ENCODE measurements at regions of chr1 and their contacts with region 1.

Region 1: DNA sequence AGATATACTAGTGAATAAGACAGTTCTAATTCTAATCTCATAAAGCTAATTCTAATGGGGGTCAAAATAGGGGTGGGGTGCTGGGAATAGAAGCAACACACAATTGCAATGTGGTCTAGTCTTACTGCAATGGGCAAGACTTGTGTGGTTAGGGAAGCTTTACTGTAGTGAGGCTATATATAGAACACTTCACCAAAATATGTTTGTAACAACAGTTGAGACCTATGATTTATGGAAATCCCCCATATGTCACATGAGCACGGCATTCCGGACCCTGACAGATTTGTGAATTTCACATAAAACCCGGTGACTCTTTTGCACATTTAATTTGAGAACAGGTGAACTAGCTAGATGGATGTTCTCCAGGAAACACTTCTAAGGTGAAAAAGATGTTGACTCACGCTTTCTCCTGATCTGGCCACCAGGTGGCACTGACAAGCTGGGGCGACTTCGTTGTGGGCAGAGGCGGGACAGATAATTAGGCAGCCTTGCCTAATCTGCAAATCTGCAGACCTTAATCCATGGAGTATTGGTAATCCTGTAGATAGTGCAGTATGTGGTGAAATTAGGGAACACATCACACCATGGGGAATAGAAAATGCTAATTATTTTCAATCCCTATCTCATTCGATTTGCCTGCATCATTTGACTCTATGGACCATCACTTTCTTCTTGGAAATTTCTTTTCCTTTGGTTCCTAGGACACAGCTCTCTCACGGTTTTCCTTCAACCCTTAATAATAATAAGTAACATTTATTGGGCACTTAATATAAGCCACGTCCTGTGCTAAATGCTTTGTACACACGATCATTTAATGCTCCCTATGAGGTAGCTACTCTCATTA is 37.7 kb downstream of the KIAA0040 start:
- DNase-seq: peak; percentile 81
- ATAC-seq: peak; percentile 64
- H3K4me3 ChIP-seq: no peak overlapping the region
- H3K4me3 Mint-ChIP-seq: no peak overlapping the region
- H3K27ac ChIP-seq: no peak overlapping the region
- H3K27ac Mint-ChIP-seq: no peak overlapping the region
- H3K4me1 ChIP-seq: peaks cover 16 to 27% of the 10 kb centered on the region in 2 donors
- H3K4me1 Mint-ChIP-seq: peaks cover 34% of the 10 kb centered on the region
- H3K27me3 ChIP-seq: peaks cover 0 to 16% (median 7%) of the 10 kb centered on the region in 4 experiments
- H3K27me3 Mint-ChIP-seq: peaks cover 18% of the 10 kb centered on the region
- CTCF ChIP-seq: peak; percentile 92

Region 2: GRCh38 chr1:175043824-175044223 is 111.0 kb before region 1 on chr1:
- CTCF ChIA-PET with region 1: no interaction called
- POLR2A ChIA-PET with region 1: no interaction called
- intact Hi-C with region 1: no loop called
- DNase-seq: no peak
- ATAC-seq: no peak
- H3K4me3 ChIP-seq: no peak overlapping the region
- H3K4me3 Mint-ChIP-seq: no peak overlapping the region
- H3K27ac ChIP-seq: no peak overlapping the region
- H3K27ac Mint-ChIP-seq: no peak overlapping the region
- H3K4me1 ChIP-seq: no peaks in the 10 kb centered on the region
- H3K4me1 Mint-ChIP-seq: no peaks in the 10 kb centered on the region
- H3K27me3 ChIP-seq: no peaks in the 10 kb centered on the region
- H3K27me3 Mint-ChIP-seq: peaks cover 33% of the 10 kb centered on the region
- CTCF ChIP-seq: no peak

Region 3: GRCh38 chr1:175178056-175178455 is 23.2 kb after region 1 on chr1:
- CTCF ChIA-PET with region 1: interaction called, 12 read pairs
- POLR2A ChIA-PET with region 1: no interaction called
- intact Hi-C with region 1: no loop called
- DNase-seq: no peak
- ATAC-seq: no peak
- H3K4me3 ChIP-seq: no peak overlapping the region
- H3K4me3 Mint-ChIP-seq: no peak overlapping the region
- H3K27ac ChIP-seq: peak overlapping the region in 1 of 2 donors; percentile 71
- H3K27ac Mint-ChIP-seq: peak overlapping the region; percentile 65
- H3K4me1 ChIP-seq: peaks cover 71 to 72% of the 10 kb centered on the region in 2 donors
- H3K4me1 Mint-ChIP-seq: peaks cover 88% of the 10 kb centered on the region
- H3K27me3 ChIP-seq: no peaks in the 10 kb centered on the region
- H3K27me3 Mint-ChIP-seq: no peaks in the 10 kb centered on the region
- CTCF ChIP-seq: no peak

Region 4: DNA sequence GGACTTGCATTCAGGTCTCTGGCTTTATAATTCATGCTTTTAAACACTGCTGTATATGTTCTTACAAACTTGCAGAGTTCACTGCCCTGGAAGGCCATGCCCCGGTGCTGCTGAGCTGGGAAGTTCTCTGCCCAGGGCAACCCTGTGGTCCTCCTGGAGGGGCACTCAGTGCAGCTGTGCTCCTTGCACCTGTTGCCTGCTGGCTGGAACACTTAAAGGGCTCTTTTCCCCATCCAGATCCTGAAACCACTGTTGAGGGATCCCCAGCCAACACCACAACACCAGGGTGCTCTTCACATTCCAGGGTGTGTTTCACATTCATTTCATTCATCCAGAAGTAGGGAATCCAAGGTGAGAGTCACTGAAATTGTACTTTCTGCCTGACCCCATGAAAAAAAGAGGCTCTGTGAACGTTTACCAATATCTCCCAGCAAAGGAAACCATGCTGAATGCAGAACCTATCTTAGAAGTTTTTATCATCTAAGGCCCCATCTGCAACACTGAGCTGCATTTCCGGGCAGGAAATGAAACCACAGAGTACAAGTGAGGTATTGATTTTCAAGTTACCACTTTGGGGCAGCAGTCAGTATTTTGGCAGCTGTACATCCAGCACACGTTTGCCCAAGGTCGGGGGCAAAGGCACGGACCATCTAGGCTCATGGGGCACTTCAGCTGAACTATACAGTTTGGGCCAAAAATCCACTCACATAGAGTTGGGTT is 54.1 kb after region 1 on chr1:
- CTCF ChIA-PET with region 1: interaction called, 25 read pairs
- POLR2A ChIA-PET with region 1: no interaction called
- intact Hi-C with region 1: no loop called
- DNase-seq: peak; percentile 75
- ATAC-seq: peak; percentile 92
- H3K4me3 ChIP-seq: peak overlapping the region in 2 of 5 experiments; percentile 5 to 47
- H3K4me3 Mint-ChIP-seq: peak overlapping the region; percentile 86
- H3K27ac ChIP-seq: peak overlapping the region; percentile 86 to 88
- H3K27ac Mint-ChIP-seq: peak overlapping the region; percentile 99
- H3K4me1 ChIP-seq: peaks cover 45 to 60% of the 10 kb centered on the region in 2 donors
- H3K4me1 Mint-ChIP-seq: peaks cover 69% of the 10 kb centered on the region
- H3K27me3 ChIP-seq: no peaks in the 10 kb centered on the region
- H3K27me3 Mint-ChIP-seq: no peaks in the 10 kb centered on the region
- CTCF ChIP-seq: no peak

Region 5: GRCh38 chr1:175319418-175320230 is 164.8 kb after region 1 on chr1:
- CTCF ChIA-PET with region 1: interaction called, 468 read pairs
- POLR2A ChIA-PET with region 1: interaction called, 4 read pairs
- intact Hi-C with region 1: loop called (anchors 1 kb)
- DNase-seq: peak; percentile 83
- ATAC-seq: peak; percentile 88
- H3K4me3 ChIP-seq: peak overlapping the region in 3 of 5 experiments; percentile 15 to 49 (median 27)
- H3K4me3 Mint-ChIP-seq: peak overlapping the region; percentile 80
- H3K27ac ChIP-seq: peak overlapping the region in 1 of 2 donors; percentile 20
- H3K27ac Mint-ChIP-seq: peak overlapping the region; percentile 75
- H3K4me1 ChIP-seq: peaks cover 6 to 14% of the 10 kb centered on the region in 2 donors
- H3K4me1 Mint-ChIP-seq: peaks cover 26% of the 10 kb centered on the region
- H3K27me3 ChIP-seq: peaks cover 0 to 3% (median 0%) of the 10 kb centered on the region in 4 experiments
- H3K27me3 Mint-ChIP-seq: no peaks in the 10 kb centered on the region
- CTCF ChIP-seq: peak; percentile 91

Region 6: GRCh38 chr1:175373786-175374623 is 219.2 kb after region 1 on chr1:
- CTCF ChIA-PET with region 1: interaction called, 10 read pairs
- POLR2A ChIA-PET with region 1: no interaction called
- intact Hi-C with region 1: no loop called
- DNase-seq: peak; percentile 41
- ATAC-seq: no peak
- H3K4me3 ChIP-seq: no peak overlapping the region
- H3K4me3 Mint-ChIP-seq: no peak overlapping the region
- H3K27ac ChIP-seq: no peak overlapping the region
- H3K27ac Mint-ChIP-seq: no peak overlapping the region
- H3K4me1 ChIP-seq: no peaks in the 10 kb centered on the region
- H3K4me1 Mint-ChIP-seq: no peaks in the 10 kb centered on the region
- H3K27me3 ChIP-seq: no peaks in the 10 kb centered on the region
- H3K27me3 Mint-ChIP-seq: peaks cover 2% of the 10 kb centered on the region
- CTCF ChIP-seq: peak; percentile 71

Region 7: GRCh38 chr1:175757381-175758015 is 602.6 kb after region 1 on chr1:
- CTCF ChIA-PET with region 1: interaction called, 5 read pairs
- POLR2A ChIA-PET with region 1: no interaction called
- intact Hi-C with region 1: loop called (anchors 5 kb)
- DNase-seq: peak; percentile 25
- ATAC-seq: no peak
- H3K4me3 ChIP-seq: no peak overlapping the region
- H3K4me3 Mint-ChIP-seq: no peak overlapping the region
- H3K27ac ChIP-seq: no peak overlapping the region
- H3K27ac Mint-ChIP-seq: no peak overlapping the region
- H3K4me1 ChIP-seq: no peaks in the 10 kb centered on the region
- H3K4me1 Mint-ChIP-seq: no peaks in the 10 kb centered on the region
- H3K27me3 ChIP-seq: peaks cover 0 to 5% (median 0%) of the 10 kb centered on the region in 4 experiments
- H3K27me3 Mint-ChIP-seq: peaks cover 11% of the 10 kb centered on the region
- CTCF ChIP-seq: peak; percentile 74

Measured in B cell (primary cell).